ENCODE measurements at regions of chr20 and their contacts with region 1.

Region 1: DNA sequence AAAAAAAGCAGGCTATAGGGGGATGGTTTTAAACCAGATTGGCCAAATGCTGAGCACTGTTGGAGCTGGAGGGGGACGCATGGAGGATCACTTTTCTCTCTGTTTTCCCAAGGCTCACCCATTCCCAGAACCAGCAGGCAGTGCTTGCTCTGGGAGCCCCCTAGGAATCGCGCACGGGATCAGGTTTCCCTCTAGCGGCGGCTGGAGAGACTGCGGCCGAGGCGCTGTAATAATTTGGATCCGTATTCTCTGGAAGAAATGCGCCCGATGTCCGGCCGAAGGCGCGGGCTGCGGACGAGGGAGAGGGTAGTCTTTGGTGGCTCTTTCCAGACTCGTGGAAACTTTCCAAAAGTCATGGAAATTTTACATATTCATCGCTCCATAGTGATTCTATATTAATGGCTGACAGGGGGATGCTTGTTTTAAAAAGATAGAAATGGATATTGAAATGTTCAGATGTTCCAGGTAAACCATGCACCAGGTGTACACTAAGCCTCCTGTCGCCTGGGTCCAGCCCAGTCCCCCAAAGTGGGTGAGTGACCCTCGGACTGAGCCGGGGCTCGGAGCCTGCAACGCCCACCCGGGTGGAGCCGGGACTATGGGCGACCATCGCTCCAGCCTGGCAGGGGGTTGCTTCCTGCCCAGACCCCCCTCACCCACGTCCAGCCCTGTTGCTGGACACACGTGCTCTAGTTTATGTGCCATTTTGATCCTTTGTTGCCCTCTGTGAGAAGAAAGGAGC is 78.7 kb upstream of the PHACTR3 start:
- DNase-seq: peak; percentile 82
- ATAC-seq: peak; percentile 89
- H3K4me3 Mint-ChIP-seq: peak overlapping the region; percentile 58
- H3K27ac Mint-ChIP-seq: no peak overlapping the region
- H3K4me1 Mint-ChIP-seq: peaks cover 7% of the 10 kb centered on the region
- H3K27me3 Mint-ChIP-seq: peaks cover 83% of the 10 kb centered on the region
- CTCF ChIP-seq: peak; percentile 67

Region 2: GRCh38 chr20:59422885-59423865 is 102.5 kb before region 1 on chr20:
- CTCF ChIA-PET with region 1: no interaction called
- POLR2A ChIA-PET with region 1: no interaction called
- DNase-seq: no peak
- ATAC-seq: no peak
- H3K4me3 Mint-ChIP-seq: no peak overlapping the region
- H3K27ac Mint-ChIP-seq: no peak overlapping the region
- H3K4me1 Mint-ChIP-seq: no peaks in the 10 kb centered on the region
- H3K27me3 Mint-ChIP-seq: peaks cover 8% of the 10 kb centered on the region
- CTCF ChIP-seq: no peak

Region 3: GRCh38 chr20:59515014-59515905 is 10.4 kb before region 1 on chr20:
- CTCF ChIA-PET with region 1: interaction called, 65 read pairs
- POLR2A ChIA-PET with region 1: no interaction called
- DNase-seq: peak; percentile 91
- ATAC-seq: peak; percentile 89
- H3K4me3 Mint-ChIP-seq: peak overlapping the region; percentile 63
- H3K27ac Mint-ChIP-seq: no peak overlapping the region
- H3K4me1 Mint-ChIP-seq: peaks cover 11% of the 10 kb centered on the region
- H3K27me3 Mint-ChIP-seq: peaks cover 22% of the 10 kb centered on the region
- CTCF ChIP-seq: peak; percentile 60

Region 4: GRCh38 chr20:59705651-59706399 is 180.2 kb after region 1 on chr20:
- CTCF ChIA-PET with region 1: no interaction called
- POLR2A ChIA-PET with region 1: no interaction called
- DNase-seq: no peak
- ATAC-seq: peak; percentile 82
- H3K4me3 Mint-ChIP-seq: no peak overlapping the region
- H3K27ac Mint-ChIP-seq: no peak overlapping the region
- H3K4me1 Mint-ChIP-seq: peaks cover 10% of the 10 kb centered on the region
- H3K27me3 Mint-ChIP-seq: peaks cover 36% of the 10 kb centered on the region
- CTCF ChIP-seq: no peak

Region 5: DNA sequence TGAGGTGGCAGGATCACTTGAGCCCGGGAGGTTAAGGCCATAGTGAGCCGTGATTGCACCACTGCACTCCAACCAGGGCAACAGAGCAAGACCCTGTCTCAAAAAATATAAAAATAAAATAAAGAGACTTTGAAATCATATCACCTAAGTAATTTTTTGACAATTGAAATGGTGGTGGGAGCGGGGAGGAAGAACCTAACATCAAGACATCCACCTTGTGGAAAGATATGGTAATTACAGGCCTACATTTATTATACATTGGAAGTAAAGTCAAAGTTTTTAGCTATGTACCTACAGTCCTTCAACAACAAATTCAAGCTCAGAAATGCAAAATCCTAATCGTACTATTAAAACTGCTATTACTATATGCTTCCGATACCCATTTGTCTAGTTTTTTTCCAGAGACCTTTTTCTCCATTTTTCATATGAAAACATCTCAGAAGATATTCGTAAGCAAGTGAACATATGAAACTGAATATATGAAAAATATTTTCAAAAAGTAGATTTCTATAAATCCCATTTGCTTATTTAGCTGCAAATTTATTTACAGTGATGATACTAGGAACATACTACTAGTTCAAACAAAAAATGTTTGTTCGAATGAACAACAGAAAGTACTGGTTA is 324.5 kb after region 1 on chr20:
- CTCF ChIA-PET with region 1: no interaction called
- POLR2A ChIA-PET with region 1: no interaction called
- DNase-seq: no peak
- ATAC-seq: no peak
- H3K4me3 Mint-ChIP-seq: no peak overlapping the region
- H3K27ac Mint-ChIP-seq: no peak overlapping the region
- H3K4me1 Mint-ChIP-seq: no peaks in the 10 kb centered on the region
- H3K27me3 Mint-ChIP-seq: peaks cover 42% of the 10 kb centered on the region
- CTCF ChIP-seq: peak; percentile 51